ENCODE measurements at regions of chr3 and their contacts with region 1.

Region 1: GRCh38 chr3:136728918-136729317 is 23.3 kb downstream of the STAG1 start:
- DNase-seq: no peak
- H3K4me3 ChIP-seq: peak overlapping the region in 53 of 59 donors; percentile 0 to 58 (median 34)
- H3K27ac ChIP-seq: peak overlapping the region in 15 of 59 donors; percentile 1 to 46 (median 27)
- H3K27me3 ChIP-seq: no peaks in the 10 kb centered on the region
- CTCF ChIP-seq: no peak

Region 2: GRCh38 chr3:136667081-136667480 is 61.8 kb before region 1 on chr3:
- intact Hi-C with region 1: loop called in 1 of 2 experiments (anchors 10 kb)
- DNase-seq: no peak
- H3K4me3 ChIP-seq: no peak overlapping the region
- H3K27ac ChIP-seq: no peak overlapping the region
- H3K27me3 ChIP-seq: no peaks in the 10 kb centered on the region
- CTCF ChIP-seq: no peak

Region 3: DNA sequence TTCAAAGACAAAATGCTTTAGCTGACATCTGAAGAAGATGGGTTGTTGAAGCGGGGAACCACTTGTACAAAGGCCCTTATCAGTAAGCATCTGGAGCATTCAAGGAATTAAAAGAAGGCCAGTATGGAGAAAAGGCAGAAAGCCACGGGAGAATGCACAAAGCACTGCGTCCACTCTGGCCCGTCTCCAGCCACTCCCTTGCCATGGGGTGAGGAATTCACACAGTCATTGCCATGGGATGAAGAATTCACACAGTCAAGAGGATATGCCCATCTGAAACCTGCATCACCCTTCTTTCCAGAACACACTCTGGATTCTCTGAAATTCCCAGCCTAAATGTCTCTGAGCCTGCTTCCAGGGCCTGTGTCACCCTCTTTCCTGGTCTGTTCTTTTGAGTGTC is 49.9 kb after region 1 on chr3:
- intact Hi-C with region 1: no loop called
- DNase-seq: no peak
- H3K4me3 ChIP-seq: no peak overlapping the region
- H3K27ac ChIP-seq: no peak overlapping the region
- H3K27me3 ChIP-seq: no peaks in the 10 kb centered on the region
- CTCF ChIP-seq: no peak